Gastrocnemius medialis (tissue), 4 donors: ENCODE measurements at regions of chr17 and their contacts with region 1.

Region 1: DNA sequence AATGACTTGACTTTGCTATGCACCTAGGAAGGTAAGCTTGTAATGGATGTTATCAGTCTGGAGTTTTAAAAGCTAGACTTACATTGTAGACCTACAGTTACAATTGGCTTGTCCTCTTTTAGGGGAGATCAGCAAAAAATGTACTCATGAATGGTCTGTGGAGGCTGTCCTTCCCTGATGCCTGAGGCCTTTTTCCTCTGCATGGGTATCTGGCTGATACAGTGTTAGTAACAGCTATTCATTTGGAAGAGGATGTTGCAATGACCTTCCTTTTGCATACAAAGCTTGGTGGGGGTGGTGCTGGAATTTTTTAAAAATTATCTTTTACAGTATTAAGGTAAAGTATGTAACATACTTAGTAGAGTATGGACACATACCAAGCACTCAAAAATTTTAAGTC is 525.5 kb downstream of the KIF2B start:
- DNase-seq: no peak
- ATAC-seq: no peak
- H3K4me3 ChIP-seq: no peak overlapping the region
- H3K27ac ChIP-seq: no peak overlapping the region
- H3K4me1 ChIP-seq: no peaks in the 10 kb centered on the region
- H3K27me3 ChIP-seq: no peaks in the 10 kb centered on the region
- CTCF ChIP-seq: no peak
- POLR2A ChIP-seq: no peak

Region 2: DNA sequence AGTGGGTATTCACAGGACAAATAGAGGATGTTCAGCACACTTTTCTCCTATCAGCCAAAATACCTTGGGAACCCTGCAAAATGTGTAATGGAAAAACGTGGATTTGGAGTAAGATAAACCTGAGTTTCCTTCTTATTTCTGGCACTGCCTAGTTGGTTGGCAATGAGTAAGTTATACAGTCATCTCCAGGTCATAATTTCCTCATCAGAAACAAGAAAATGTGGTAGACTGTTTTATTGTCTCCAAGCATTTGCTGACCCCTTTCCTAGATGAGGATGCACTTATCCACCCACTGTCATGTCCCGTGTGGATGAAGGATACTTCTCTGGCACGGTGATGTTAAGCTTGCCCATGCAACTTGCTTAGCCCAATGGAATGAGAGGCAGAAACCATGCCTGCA is 67.5 kb before region 1 on chr17:
- in situ Hi-C with region 1: loop called in 1 of 4 experiments (anchors 10 kb)
- intact Hi-C with region 1: no loop called
- DNase-seq: no peak
- ATAC-seq: no peak
- H3K4me3 ChIP-seq: no peak overlapping the region
- H3K27ac ChIP-seq: no peak overlapping the region
- H3K4me1 ChIP-seq: no peaks in the 10 kb centered on the region
- H3K27me3 ChIP-seq: no peaks in the 10 kb centered on the region
- CTCF ChIP-seq: no peak
- POLR2A ChIP-seq: no peak

Region 3: GRCh38 chr17:55020277-55020676 is 672.0 kb after region 1 on chr17:
- in situ Hi-C with region 1: no loop called
- intact Hi-C with region 1: no loop called
- DNase-seq: no peak
- ATAC-seq: no peak
- H3K4me3 ChIP-seq: no peak overlapping the region
- H3K27ac ChIP-seq: no peak overlapping the region
- H3K4me1 ChIP-seq: no peaks in the 10 kb centered on the region
- H3K27me3 ChIP-seq: no peaks in the 10 kb centered on the region
- CTCF ChIP-seq: no peak
- POLR2A ChIP-seq: no peak